Kidney (tissue), 22 donors: ENCODE measurements at regions of chr20 and their contacts with region 1.

Region 1: GRCh38 chr20:50478162-50479036 is 31.8 kb upstream of the PTPN1 start:
- DNase-seq: peak; percentile 32 to 86 (median 47)
- H3K4me3 ChIP-seq: no peak overlapping the region
- H3K27ac ChIP-seq: no peak overlapping the region
- H3K4me1 ChIP-seq: peaks cover 0 to 7% (median 0%) of the 10 kb centered on the region in 3 donors
- H3K27me3 ChIP-seq: no peaks in the 10 kb centered on the region
- CTCF ChIP-seq: peak; percentile 57

Region 2: GRCh38 chr20:50575847-50576720 is 97.7 kb after region 1 on chr20:
- intact Hi-C with region 1: loop called (anchors 10 kb)
- DNase-seq: peak in 4 of 5 donors; percentile 61 to 71 (median 66)
- H3K4me3 ChIP-seq: no peak overlapping the region
- H3K27ac ChIP-seq: no peak overlapping the region
- H3K4me1 ChIP-seq: peaks cover 0 to 16% (median 6%) of the 10 kb centered on the region in 3 donors
- H3K27me3 ChIP-seq: no peaks in the 10 kb centered on the region
- CTCF ChIP-seq: peak; percentile 74